ENCODE measurements at regions of chr13 and their contacts with region 1.

Region 1: DNA sequence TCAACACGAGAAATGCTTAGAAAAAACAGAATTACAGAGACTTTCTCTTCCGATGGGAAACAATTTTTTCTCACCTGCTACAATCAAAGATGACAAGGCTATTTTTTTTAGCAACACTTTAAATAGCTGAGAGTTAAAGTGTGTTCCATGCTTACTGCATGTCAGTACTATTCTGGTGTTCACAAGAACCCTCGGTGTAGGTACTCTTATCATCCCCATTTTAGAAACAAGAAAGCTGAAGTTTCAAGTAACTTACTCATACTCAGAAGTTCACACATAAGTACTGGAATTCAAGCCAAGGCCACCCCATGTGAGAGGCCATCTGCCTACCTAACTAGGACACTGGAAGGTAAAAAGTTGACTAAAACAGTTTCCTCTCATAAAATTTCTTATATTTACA is 9.0 kb upstream of the TNFRSF19 start:
- DNase-seq: no peak
- ATAC-seq: peak; percentile 60

Region 2: GRCh38 chr13:22740264-22740663 is 821.0 kb before region 1 on chr13:
- intact Hi-C with region 1: no loop called
- DNase-seq: no peak
- ATAC-seq: no peak

Region 3: DNA sequence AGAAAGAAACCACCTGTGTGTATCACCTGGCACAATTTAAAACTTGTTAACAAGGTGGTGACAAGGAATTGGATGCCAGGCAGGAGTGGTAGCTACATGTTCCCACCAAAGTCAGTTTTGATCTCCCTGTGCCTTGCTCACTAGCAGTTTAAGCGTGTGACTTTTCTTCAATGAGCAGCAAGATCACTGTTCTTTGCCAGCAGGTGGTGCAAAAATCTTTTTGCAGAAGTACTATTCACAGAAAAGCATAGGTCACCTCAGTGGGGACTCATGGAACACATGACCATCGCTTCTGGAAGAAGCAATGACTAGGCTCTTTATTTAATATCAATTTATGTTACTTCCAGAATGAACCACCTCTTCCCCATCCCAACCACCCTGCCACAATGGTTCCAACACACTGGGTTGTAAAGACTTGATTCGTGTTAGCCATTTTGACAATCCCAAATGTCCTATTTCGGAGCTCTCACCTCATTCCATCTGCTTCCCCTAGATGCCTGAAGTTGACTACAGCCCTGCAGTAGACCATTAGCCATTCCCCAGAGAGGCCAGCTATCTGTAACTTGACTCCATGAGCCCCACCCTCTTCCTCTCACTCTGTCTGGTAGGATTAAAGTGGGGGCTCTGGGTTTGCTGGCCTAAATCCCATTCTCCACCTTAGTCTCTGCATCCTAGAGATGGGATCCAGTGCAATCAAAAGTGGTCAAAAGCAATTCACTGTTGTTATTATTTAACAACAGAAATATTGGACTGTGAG is 50.1 kb before region 1 on chr13:
- intact Hi-C with region 1: loop called (anchors 5 kb)
- DNase-seq: no peak
- ATAC-seq: peak; percentile 45

Region 4: GRCh38 chr13:23531446-23531845 is 29.8 kb before region 1 on chr13:
- intact Hi-C with region 1: no loop called
- DNase-seq: no peak
- ATAC-seq: no peak

Region 5: DNA sequence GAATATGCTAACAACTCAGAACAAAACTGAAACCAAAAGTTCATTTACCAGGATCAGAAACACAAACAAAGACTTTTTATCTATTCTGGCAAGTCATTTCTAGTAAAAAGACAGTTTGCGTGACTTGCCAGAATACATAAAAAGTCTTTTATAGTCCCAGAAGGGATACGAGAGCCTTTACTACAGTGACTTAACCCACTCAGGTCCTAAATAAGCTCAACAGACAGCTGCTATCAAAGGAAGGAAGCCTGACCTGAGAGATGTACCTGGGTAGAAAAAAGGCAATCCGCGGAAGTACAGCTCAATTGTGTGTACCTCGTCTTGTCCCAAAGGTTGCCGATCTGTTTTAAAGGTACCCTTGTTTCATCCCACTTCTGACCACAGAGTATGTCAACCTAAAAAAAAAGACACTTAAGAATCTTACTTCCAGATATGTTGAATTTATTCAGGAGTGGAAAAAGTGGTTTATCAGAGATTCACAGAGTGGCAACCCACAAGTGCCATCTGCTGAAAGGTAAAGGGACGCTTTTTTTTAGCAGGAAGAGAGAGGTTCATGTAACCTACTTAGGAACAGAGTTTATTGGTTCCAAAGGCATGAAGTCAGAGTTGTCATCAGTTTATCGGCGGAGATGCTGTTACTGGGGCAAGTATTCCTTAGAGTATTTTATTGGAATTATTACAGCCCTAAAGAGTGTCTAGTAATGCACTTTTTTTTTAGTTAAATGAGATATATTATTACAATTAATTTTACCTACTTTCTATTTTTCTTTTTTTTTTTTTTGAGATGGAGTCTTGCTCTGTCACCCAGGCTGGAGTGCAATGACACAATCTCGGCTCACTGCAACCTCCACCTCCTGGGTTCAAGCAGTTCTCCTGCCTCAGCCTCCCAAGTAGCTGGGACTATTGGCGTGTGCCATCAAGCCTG is 405.7 kb after region 1 on chr13:
- intact Hi-C with region 1: no loop called
- DNase-seq: no peak
- ATAC-seq: no peak

Measured in Right ventricle myocardium superior (tissue), 1 donor.